ENCODE measurements at regions of chr18 and their contacts with region 1.

Region 1: DNA sequence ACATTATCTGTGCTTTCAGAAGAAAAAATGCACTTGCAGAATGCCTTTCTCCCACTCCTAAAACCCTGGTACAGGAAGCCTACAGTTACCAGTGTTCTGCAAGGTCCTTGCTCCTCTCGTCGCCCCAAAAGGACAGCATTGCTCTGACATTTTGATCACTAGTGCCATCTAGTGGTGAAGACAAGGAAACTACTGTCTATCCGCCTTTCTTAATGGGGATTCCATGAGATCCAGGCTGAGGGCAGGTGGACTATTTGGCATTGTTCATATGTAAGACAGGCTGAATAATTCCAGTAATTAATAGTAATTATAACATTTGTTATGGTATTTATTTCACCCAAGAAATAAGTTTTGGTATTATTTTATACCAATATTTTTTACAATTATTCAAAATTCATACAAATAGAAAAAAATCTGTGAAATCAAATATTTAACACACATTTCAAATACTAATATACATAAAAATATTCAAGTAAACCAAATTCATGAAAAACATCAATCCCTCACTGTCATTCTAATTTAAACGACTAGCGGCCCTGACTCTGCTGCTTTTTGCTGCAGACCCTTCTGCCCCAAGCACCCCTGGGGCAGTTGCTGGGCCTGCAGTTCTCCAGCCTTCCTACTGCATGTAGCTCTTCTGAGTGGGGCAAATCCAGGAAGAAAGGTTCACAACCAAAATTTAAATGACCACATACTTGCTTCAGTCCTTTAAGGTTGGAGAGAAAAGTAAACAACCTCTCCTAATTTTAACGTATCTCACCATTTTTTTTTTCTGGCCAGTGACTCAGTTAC is 19.0 kb downstream of the TPGS2 start:
- DNase-seq: peak in 7 of 9 donors; percentile 29 to 72 (median 57)
- ATAC-seq: peak; percentile 92
- H3K4me3 ChIP-seq: no peak overlapping the region
- H3K4me3 Mint-ChIP-seq: no peak overlapping the region
- H3K27ac ChIP-seq: no peak overlapping the region
- H3K27ac Mint-ChIP-seq: no peak overlapping the region
- H3K4me1 ChIP-seq: no peaks in the 10 kb centered on the region
- H3K4me1 Mint-ChIP-seq: peaks cover 0 to 16% (median 5%) of the 10 kb centered on the region in 7 donors
- H3K27me3 ChIP-seq: no peaks in the 10 kb centered on the region
- H3K27me3 Mint-ChIP-seq: no peaks in the 10 kb centered on the region

Region 2: DNA sequence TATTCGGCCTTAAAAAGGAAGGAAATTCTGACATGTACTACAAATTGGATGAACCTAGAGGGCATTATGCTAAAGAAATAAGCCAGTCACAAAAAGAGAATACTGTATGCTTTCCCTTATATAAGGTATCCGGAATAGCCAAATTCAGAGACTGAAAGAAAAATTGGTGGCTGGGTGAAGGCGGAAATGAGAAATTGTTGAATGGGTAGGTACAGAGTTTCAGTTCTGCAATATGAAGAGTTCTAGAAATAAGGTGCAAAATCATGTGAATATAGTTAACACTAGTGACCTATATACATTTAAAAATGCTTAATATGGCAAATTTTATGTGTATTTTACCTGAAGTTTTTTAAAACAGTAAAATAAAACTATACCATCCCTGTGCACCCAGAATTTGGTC is 794.2 kb before region 1 on chr18:
- CTCF ChIA-PET with region 1: no interaction called
- POLR2A ChIA-PET with region 1: no interaction called
- intact Hi-C with region 1: loop called in 1 of 2 experiments (anchors 1 kb)
- DNase-seq: no peak
- ATAC-seq: no peak
- H3K4me3 ChIP-seq: no peak overlapping the region
- H3K4me3 Mint-ChIP-seq: no peak overlapping the region
- H3K27ac ChIP-seq: no peak overlapping the region
- H3K27ac Mint-ChIP-seq: no peak overlapping the region
- H3K4me1 ChIP-seq: no peaks in the 10 kb centered on the region
- H3K4me1 Mint-ChIP-seq: peaks cover 0 to 17% (median 5%) of the 10 kb centered on the region in 7 donors
- H3K27me3 ChIP-seq: no peaks in the 10 kb centered on the region
- H3K27me3 Mint-ChIP-seq: no peaks in the 10 kb centered on the region

Region 3: DNA sequence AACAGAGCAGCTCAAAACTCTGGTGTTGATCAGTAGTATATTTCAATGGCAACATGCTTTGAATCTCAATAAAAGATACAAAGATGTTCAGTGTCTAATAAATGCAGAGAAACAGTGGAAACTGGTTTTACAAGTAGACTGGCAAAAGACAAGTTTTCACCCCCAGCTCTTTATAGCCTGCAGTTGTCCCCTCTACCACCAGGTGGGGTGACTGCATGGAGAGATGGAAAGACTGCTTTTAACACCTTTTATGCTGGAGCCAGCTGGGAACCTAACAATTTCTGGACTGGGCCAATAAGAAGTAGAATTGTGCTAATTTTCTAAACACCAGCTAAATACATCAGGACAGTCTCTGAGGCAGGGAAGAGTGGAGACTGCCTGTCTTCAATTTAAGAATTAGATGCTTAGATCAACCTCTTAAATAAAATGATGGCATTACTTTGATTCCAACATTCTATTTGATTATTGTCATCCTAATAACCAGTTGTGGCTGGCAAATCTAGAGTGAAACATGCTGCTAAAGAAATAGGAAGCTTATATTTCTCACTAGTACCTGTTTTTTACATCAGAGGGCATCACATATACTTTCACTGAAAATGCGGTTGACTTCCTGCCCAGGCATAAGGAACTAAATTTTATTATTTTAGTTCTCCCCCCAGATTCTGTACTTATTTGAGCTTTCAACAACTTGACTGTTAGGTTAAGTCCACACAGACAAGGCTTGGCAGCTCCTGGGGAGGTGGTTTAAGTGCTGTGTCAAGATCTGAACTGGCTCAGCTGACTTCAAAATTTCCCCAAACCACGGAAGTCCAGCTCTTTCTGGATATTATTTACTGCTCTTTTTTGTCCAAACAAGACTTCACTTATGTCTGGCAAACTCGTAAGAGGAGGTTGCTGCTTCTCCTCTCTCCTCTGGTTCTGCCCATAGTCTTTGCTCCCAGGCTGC is 121.5 kb before region 1 on chr18:
- CTCF ChIA-PET with region 1: interaction called, 8 read pairs
- POLR2A ChIA-PET with region 1: no interaction called
- intact Hi-C with region 1: loop called in 1 of 2 experiments (anchors 1 kb)
- DNase-seq: peak in 5 of 9 donors; percentile 8 to 47 (median 25)
- ATAC-seq: peak; percentile 31
- H3K4me3 ChIP-seq: no peak overlapping the region
- H3K4me3 Mint-ChIP-seq: no peak overlapping the region
- H3K27ac ChIP-seq: no peak overlapping the region
- H3K27ac Mint-ChIP-seq: no peak overlapping the region
- H3K4me1 ChIP-seq: no peaks in the 10 kb centered on the region
- H3K4me1 Mint-ChIP-seq: no peaks in the 10 kb centered on the region
- H3K27me3 ChIP-seq: no peaks in the 10 kb centered on the region
- H3K27me3 Mint-ChIP-seq: peaks cover 4 to 24% (median 19%) of the 10 kb centered on the region in 5 donors

Region 4: GRCh38 chr18:36769611-36770314 is 40.0 kb before region 1 on chr18:
- CTCF ChIA-PET with region 1: no interaction called
- POLR2A ChIA-PET with region 1: no interaction called
- intact Hi-C with region 1: loop called in 1 of 2 experiments (anchors 2 kb)
- DNase-seq: no peak
- ATAC-seq: no peak
- H3K4me3 ChIP-seq: no peak overlapping the region
- H3K4me3 Mint-ChIP-seq: no peak overlapping the region
- H3K27ac ChIP-seq: no peak overlapping the region
- H3K27ac Mint-ChIP-seq: no peak overlapping the region
- H3K4me1 ChIP-seq: no peaks in the 10 kb centered on the region
- H3K4me1 Mint-ChIP-seq: peaks cover 0 to 19% (median 8%) of the 10 kb centered on the region in 7 donors
- H3K27me3 ChIP-seq: no peaks in the 10 kb centered on the region
- H3K27me3 Mint-ChIP-seq: peaks cover 0 to 12% (median 5%) of the 10 kb centered on the region in 5 donors

Region 5: GRCh38 chr18:36798738-36799473 is 10.9 kb before region 1 on chr18:
- CTCF ChIA-PET with region 1: interaction called, 6 read pairs
- POLR2A ChIA-PET with region 1: no interaction called
- intact Hi-C with region 1: loop called in 1 of 2 experiments (anchors 2 kb)
- DNase-seq: no peak
- ATAC-seq: no peak
- H3K4me3 ChIP-seq: no peak overlapping the region
- H3K4me3 Mint-ChIP-seq: no peak overlapping the region
- H3K27ac ChIP-seq: no peak overlapping the region
- H3K27ac Mint-ChIP-seq: no peak overlapping the region
- H3K4me1 ChIP-seq: no peaks in the 10 kb centered on the region
- H3K4me1 Mint-ChIP-seq: peaks cover 0 to 4% (median 0%) of the 10 kb centered on the region in 7 donors
- H3K27me3 ChIP-seq: no peaks in the 10 kb centered on the region
- H3K27me3 Mint-ChIP-seq: no peaks in the 10 kb centered on the region

Region 6: GRCh38 chr18:36828630-36829361 is 19.0 kb after region 1 on chr18 and contains the starts of genes KIAA1328 and TPGS2:
- CTCF ChIA-PET with region 1: interaction called, 4 read pairs
- POLR2A ChIA-PET with region 1: interaction called, 3 read pairs
- intact Hi-C with region 1: loop called in 1 of 2 experiments (anchors 1 kb)
- DNase-seq: peak; percentile 77 to 90 (median 87)
- ATAC-seq: peak; percentile 96
- H3K4me3 ChIP-seq: peak within 1 kb of the TSS; percentile 79
- H3K4me3 Mint-ChIP-seq: peak within 1 kb of the TSS; percentile 73 to 98 (median 92)
- H3K27ac ChIP-seq: peak within 1 kb of the TSS; percentile 75
- H3K27ac Mint-ChIP-seq: peak within 1 kb of the TSS; percentile 57 to 98 (median 90)
- H3K4me1 ChIP-seq: peaks cover 15 to 18% of the 10 kb centered on the region in 2 donors
- H3K4me1 Mint-ChIP-seq: peaks cover 27 to 60% (median 47%) of the 10 kb centered on the region in 7 donors
- H3K27me3 ChIP-seq: no peaks in the 10 kb centered on the region
- H3K27me3 Mint-ChIP-seq: no peaks in the 10 kb centered on the region
- total RNA-seq, gene KIAA1328: 8.1 to 17.6 (median 16.0) TPM
- total RNA-seq, gene TPGS2: 16.9 to 92.8 (median 53.5) TPM